CD4-positive, alpha-beta memory T cell (primary cell): ENCODE measurements at regions of chr19 and their contacts with region 1.

Region 1: GRCh38 chr19:7170983-7171382 is 101.5 kb downstream of the ZNF557 start:
- DNase-seq: no peak
- H3K4me3 ChIP-seq: no peak overlapping the region
- H3K4me3 Mint-ChIP-seq: no peak overlapping the region
- H3K27ac ChIP-seq: no peak overlapping the region
- H3K27ac Mint-ChIP-seq: no peak overlapping the region
- H3K4me1 ChIP-seq: no peaks in the 10 kb centered on the region
- H3K4me1 Mint-ChIP-seq: peaks cover 0 to 2% (median 0%) of the 10 kb centered on the region in 4 donors
- H3K27me3 ChIP-seq: no peaks in the 10 kb centered on the region
- H3K27me3 Mint-ChIP-seq: peaks cover 1 to 2% of the 10 kb centered on the region in 2 donors

Region 2: DNA sequence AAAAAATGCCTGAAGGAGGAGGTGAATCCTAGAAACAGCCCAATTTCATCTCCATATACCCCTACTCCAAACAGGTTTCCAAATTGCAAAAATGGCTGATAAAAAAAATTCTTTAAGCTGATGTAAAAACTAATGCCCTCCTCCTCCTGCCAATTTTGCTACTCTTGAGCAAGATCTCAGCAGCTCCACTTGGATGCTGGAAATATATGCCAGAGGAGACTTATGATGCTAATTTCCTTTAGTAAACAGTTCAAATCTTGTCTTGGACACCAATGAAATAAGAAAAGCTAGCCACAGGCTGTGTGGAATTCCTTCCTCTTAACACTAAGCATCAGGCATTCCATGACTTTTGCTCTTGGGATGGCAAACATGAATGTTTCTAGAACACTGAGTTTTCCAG is 55.8 kb after region 1 on chr19:
- CTCF ChIA-PET with region 1: no interaction called
- POLR2A ChIA-PET with region 1: no interaction called
- intact Hi-C with region 1: loop called (anchors 5 kb)
- DNase-seq: no peak
- H3K4me3 ChIP-seq: no peak overlapping the region
- H3K4me3 Mint-ChIP-seq: no peak overlapping the region
- H3K27ac ChIP-seq: no peak overlapping the region
- H3K27ac Mint-ChIP-seq: no peak overlapping the region
- H3K4me1 ChIP-seq: no peaks in the 10 kb centered on the region
- H3K4me1 Mint-ChIP-seq: no peaks in the 10 kb centered on the region
- H3K27me3 ChIP-seq: no peaks in the 10 kb centered on the region
- H3K27me3 Mint-ChIP-seq: peaks cover 11 to 17% of the 10 kb centered on the region in 2 donors